CD4-positive, alpha-beta T cell (primary cell): ENCODE measurements at regions of chr2 and their contacts with region 1.

Region 1: GRCh38 chr2:46650556-46651001 is 171.2 kb downstream of the TMEM247 start:
- DNase-seq: peak; percentile 39 to 88 (median 58)
- ATAC-seq: peak; percentile 80
- H3K4me3 ChIP-seq: no peak overlapping the region
- H3K4me3 Mint-ChIP-seq: no peak overlapping the region
- H3K27ac ChIP-seq: no peak overlapping the region
- H3K27ac Mint-ChIP-seq: no peak overlapping the region
- H3K4me1 ChIP-seq: no peaks in the 10 kb centered on the region
- H3K4me1 Mint-ChIP-seq: no peaks in the 10 kb centered on the region
- H3K27me3 ChIP-seq: no peaks in the 10 kb centered on the region
- H3K27me3 Mint-ChIP-seq: no peaks in the 10 kb centered on the region
- CTCF ChIP-seq: peak; percentile 94

Region 2: DNA sequence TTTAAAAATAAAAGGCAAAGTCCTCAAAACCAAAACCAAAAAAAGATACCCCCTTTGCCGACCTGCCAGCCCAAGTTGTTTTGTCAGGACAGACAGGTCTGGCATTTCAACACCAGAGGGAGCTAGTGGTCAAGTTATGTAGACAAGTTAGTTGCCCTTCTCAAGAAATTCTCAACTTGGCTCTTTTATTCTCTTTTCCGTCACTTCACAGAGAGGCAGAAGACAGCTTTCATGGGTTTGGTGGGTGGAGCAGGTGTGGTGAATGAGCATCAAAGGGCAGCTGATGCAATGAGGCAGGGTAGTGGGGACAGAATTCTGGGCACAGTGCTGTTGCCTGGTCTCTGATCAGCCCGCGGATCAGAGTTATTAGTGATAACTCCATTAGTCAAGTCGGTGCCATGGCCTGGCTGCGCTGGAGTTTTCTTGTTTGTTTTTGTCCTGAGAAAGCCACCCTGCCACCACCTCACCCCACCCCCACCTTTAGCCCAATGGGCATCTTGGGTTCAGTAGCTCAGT is 657.0 kb before region 1 on chr2:
- CTCF ChIA-PET with region 1: no interaction called
- POLR2A ChIA-PET with region 1: no interaction called
- intact Hi-C with region 1: loop called (anchors 2 kb)
- DNase-seq: peak in 13 of 14 experiments; percentile 8 to 80 (median 42)
- ATAC-seq: peak; percentile 68
- H3K4me3 ChIP-seq: no peak overlapping the region
- H3K4me3 Mint-ChIP-seq: no peak overlapping the region
- H3K27ac ChIP-seq: no peak overlapping the region
- H3K27ac Mint-ChIP-seq: no peak overlapping the region
- H3K4me1 ChIP-seq: no peaks in the 10 kb centered on the region
- H3K4me1 Mint-ChIP-seq: peaks cover 6% of the 10 kb centered on the region
- H3K27me3 ChIP-seq: no peaks in the 10 kb centered on the region
- H3K27me3 Mint-ChIP-seq: no peaks in the 10 kb centered on the region
- CTCF ChIP-seq: peak; percentile 80

Region 3: GRCh38 chr2:46062637-46063412 is 587.8 kb before region 1 on chr2:
- CTCF ChIA-PET with region 1: interaction called, 6 read pairs
- POLR2A ChIA-PET with region 1: no interaction called
- intact Hi-C with region 1: loop called (anchors 1 to 10 kb)
- DNase-seq: peak; percentile 41 to 74 (median 57)
- ATAC-seq: peak; percentile 52
- H3K4me3 ChIP-seq: no peak overlapping the region
- H3K4me3 Mint-ChIP-seq: no peak overlapping the region
- H3K27ac ChIP-seq: no peak overlapping the region
- H3K27ac Mint-ChIP-seq: no peak overlapping the region
- H3K4me1 ChIP-seq: no peaks in the 10 kb centered on the region
- H3K4me1 Mint-ChIP-seq: no peaks in the 10 kb centered on the region
- H3K27me3 ChIP-seq: no peaks in the 10 kb centered on the region
- H3K27me3 Mint-ChIP-seq: no peaks in the 10 kb centered on the region
- CTCF ChIP-seq: peak; percentile 88

Region 4: GRCh38 chr2:46540496-46541331 is 109.9 kb before region 1 on chr2:
- CTCF ChIA-PET with region 1: interaction called, 11 read pairs
- POLR2A ChIA-PET with region 1: no interaction called
- intact Hi-C with region 1: no loop called
- DNase-seq: peak in 1 of 14 experiments; percentile 30
- ATAC-seq: no peak
- H3K4me3 ChIP-seq: peak overlapping the region; percentile 61
- H3K4me3 Mint-ChIP-seq: peak overlapping the region; percentile 98
- H3K27ac ChIP-seq: no peak overlapping the region
- H3K27ac Mint-ChIP-seq: peak overlapping the region; percentile 96
- H3K4me1 ChIP-seq: peaks cover 67% of the 10 kb centered on the region
- H3K4me1 Mint-ChIP-seq: peaks cover 79% of the 10 kb centered on the region
- H3K27me3 ChIP-seq: no peaks in the 10 kb centered on the region
- H3K27me3 Mint-ChIP-seq: no peaks in the 10 kb centered on the region
- CTCF ChIP-seq: no peak

Region 5: GRCh38 chr2:46615986-46616485 is 34.5 kb before region 1 on chr2:
- CTCF ChIA-PET with region 1: interaction called, 11 read pairs
- POLR2A ChIA-PET with region 1: no interaction called
- intact Hi-C with region 1: no loop called
- DNase-seq: peak in 9 of 14 experiments; percentile 2 to 66 (median 37)
- ATAC-seq: no peak
- H3K4me3 ChIP-seq: peak overlapping the region; percentile 89
- H3K4me3 Mint-ChIP-seq: peak overlapping the region; percentile 91
- H3K27ac ChIP-seq: peak overlapping the region; percentile 91 to 92
- H3K27ac Mint-ChIP-seq: peak overlapping the region; percentile 94
- H3K4me1 ChIP-seq: peaks cover 15% of the 10 kb centered on the region
- H3K4me1 Mint-ChIP-seq: peaks cover 53% of the 10 kb centered on the region
- H3K27me3 ChIP-seq: no peaks in the 10 kb centered on the region
- H3K27me3 Mint-ChIP-seq: no peaks in the 10 kb centered on the region
- CTCF ChIP-seq: peak; percentile 33

Region 6: GRCh38 chr2:46887028-46887885 is 236.7 kb after region 1 on chr2:
- CTCF ChIA-PET with region 1: no interaction called
- POLR2A ChIA-PET with region 1: no interaction called
- intact Hi-C with region 1: loop called in 1 of 2 experiments (anchors 5 kb)
- DNase-seq: no peak
- ATAC-seq: no peak
- H3K4me3 ChIP-seq: no peak overlapping the region
- H3K4me3 Mint-ChIP-seq: no peak overlapping the region
- H3K27ac ChIP-seq: no peak overlapping the region
- H3K27ac Mint-ChIP-seq: no peak overlapping the region
- H3K4me1 ChIP-seq: no peaks in the 10 kb centered on the region
- H3K4me1 Mint-ChIP-seq: no peaks in the 10 kb centered on the region
- H3K27me3 ChIP-seq: peaks cover 0 to 3% of the 10 kb centered on the region in 2 experiments
- H3K27me3 Mint-ChIP-seq: peaks cover 5% of the 10 kb centered on the region
- CTCF ChIP-seq: no peak